Posterior cingulate gyrus (tissue), 11 donors: ENCODE measurements at regions of chr9 and their contacts with region 1.

Region 1: DNA sequence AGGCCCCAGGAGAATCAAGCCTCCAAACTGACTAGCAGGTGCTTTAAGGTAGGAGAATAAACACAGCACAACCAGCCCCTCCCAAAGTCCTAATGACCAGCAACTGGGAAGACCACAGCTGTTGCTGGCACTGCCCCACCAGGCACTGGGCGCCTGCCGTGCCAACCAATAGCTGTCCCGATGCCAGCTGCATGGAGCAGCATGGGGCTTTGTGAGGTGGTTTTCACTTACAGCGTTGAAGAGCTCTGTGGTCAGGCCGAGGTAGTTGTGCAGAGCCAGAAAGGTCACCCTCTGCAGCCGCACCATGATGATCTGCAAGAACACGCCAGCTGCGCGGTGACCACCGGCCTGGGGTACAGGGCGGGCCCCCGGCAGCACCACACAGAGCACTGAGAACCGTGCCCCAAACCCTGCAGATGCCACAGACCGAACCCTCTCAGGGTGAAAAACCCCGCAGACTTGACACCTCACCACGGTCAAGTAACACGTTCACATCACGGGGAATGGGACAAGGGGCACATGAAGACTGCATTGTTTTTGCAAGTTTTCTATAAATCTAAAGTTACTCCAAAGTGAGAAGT is 28.7 kb downstream of the PNPLA7 start:
- DNase-seq: peak in 3 of 10 donors; percentile 52 to 82 (median 80)

Region 2: DNA sequence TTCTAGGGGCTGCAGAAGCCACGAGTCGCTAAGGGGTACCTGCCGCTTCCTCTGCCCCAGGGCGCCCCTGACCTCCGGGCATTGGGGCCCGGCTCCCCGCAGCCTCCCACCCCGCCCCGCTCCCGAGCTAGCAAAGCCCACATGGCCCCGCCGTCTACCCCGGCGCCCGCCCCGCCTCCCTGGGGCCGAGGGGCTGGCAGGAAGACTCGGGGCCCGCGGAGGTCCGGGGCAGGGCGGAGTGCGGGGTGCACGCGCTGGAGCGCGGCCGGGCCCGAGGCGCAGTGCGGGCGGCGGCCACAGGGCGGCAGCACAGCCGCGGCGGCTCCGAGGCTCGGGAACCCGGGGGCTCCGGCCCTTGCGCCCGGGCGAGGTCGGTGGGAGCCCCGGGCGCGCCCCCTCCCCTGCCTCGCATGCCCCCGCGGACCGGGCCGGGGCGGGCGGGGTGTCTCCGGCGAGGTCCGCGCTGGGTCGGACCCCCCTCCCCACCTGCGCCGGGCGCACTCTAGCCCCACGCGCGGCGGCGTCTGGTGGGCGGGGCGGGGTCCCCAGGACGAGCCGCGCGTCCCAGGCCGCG is 226.2 kb before region 1 on chr9:
- intact Hi-C with region 1: loop called (anchors 10 kb)
- DNase-seq: peak in 1 of 10 donors; percentile 5

Region 3: DNA sequence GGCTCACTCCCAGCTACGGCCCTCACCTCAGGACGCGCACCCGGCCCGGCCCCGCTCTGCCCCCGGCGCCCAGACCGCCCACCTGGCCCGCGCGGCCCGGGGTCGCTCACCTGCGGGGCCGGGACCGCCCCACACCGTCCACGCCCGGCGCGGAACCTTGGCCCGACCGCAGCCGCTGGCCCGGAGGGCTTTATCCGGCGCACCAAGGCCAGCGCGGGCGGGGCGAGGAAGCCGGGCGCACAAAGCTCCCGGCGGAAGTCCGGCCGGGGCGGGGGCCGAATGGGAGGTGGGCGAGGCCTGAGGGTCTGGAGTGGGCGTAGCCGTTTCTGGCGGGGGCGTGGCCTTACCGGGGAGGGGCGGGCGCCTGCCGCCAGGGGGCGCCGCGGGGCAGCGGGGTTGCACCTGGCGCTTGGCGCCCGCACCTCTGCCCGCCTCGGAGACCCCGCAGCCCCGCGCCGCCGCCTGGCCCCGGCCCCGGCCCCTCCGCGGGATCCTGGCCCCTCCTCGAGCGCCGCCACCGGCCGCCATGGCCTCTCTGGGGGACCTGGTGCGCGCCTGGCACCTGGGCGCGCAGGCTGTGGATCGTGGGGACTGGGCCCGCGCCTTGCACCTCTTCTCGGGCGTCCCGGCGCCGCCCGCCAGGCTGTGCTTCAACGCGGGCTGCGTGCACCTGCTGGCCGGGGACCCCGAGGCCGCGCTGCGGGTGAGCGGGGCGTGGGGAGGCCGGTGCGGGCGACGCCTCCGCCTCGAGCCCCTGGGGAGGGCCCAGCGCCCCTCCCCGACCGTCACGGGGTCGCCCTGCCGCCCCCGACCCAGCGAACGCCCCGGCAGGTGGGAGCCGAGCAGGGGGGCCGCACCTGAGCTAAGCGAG is 98.3 kb before region 1 on chr9 and contains the starts of genes EXD3 and NOXA1:
- intact Hi-C with region 1: loop called (anchors 10 kb)
- DNase-seq: peak; percentile 85 to 98 (median 89)